Calu3 (cell line): ENCODE measurements at regions of chr15 and their contacts with region 1.

Region 1: DNA sequence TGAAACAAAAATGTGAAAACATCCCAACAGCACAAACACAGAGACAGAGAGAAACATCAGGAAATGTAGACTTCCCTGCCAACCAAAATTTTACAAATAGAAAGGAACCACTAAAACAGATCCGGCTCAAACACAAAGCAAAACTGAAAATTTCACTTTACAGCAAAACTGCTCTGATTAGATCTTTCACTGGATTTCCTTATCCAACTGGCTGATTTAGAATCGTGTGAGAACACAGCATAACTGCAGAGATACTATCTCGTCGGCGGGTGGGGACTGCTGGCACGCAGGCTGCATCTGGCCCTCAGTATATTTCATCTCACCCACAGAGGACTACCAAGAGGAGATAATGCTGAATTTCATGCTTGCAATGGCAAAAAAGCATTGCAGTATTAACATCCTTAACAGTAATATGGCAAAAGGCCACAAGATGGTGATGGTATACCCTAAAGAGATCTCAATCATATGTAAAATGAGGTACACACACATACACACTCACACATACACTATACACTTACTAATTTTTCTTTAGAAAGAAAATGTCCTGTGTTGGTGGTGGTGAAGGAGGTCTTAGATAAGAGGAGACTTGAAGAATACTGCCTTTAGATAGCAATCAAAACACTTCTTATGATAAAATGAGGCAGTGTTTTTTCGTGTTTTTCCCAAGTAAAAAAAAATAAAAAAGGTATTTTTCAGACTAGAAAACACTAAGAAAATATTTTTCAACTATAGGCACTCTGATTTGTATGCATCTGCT is 10.6 kb upstream of the LEO1 start:
- DNase-seq: peak; percentile 13
- H3K4me3 Mint-ChIP-seq: peak overlapping the region; percentile 28
- H3K27ac Mint-ChIP-seq: no peak overlapping the region
- H3K4me1 Mint-ChIP-seq: peaks cover 14% of the 10 kb centered on the region
- H3K27me3 Mint-ChIP-seq: no peaks in the 10 kb centered on the region
- CTCF ChIP-seq: peak; percentile 48

Region 2: GRCh38 chr15:51992976-51993375 is 10.8 kb after region 1 on chr15:
- CTCF ChIA-PET with region 1: no interaction called
- intact Hi-C with region 1: no loop called
- DNase-seq: no peak
- H3K4me3 Mint-ChIP-seq: no peak overlapping the region
- H3K27ac Mint-ChIP-seq: no peak overlapping the region
- H3K4me1 Mint-ChIP-seq: peaks cover 20% of the 10 kb centered on the region
- H3K27me3 Mint-ChIP-seq: no peaks in the 10 kb centered on the region
- CTCF ChIP-seq: no peak

Region 3: DNA sequence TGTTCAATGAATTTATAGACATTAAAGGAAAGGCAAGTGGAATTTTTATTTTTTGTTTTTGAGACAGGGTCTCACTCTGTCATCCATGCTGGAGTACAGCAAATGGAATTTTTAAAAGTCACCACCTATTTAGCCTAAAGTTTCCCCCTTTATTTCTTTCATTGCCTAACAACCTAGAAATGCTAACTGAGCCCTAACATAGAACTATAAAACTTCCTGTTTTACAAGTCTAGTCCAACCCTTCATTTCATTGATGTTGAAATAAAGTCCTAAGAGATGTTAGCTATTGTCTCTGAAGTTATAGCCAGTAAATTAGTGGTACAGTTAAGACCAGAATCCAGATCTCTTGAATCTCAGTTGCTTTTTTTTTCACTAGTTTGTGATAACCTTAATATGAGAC is 75.8 kb after region 1 on chr15:
- CTCF ChIA-PET with region 1: no interaction called
- intact Hi-C with region 1: no loop called
- DNase-seq: no peak
- H3K4me3 Mint-ChIP-seq: no peak overlapping the region
- H3K27ac Mint-ChIP-seq: no peak overlapping the region
- H3K4me1 Mint-ChIP-seq: no peaks in the 10 kb centered on the region
- H3K27me3 Mint-ChIP-seq: no peaks in the 10 kb centered on the region
- CTCF ChIP-seq: no peak

Region 4: DNA sequence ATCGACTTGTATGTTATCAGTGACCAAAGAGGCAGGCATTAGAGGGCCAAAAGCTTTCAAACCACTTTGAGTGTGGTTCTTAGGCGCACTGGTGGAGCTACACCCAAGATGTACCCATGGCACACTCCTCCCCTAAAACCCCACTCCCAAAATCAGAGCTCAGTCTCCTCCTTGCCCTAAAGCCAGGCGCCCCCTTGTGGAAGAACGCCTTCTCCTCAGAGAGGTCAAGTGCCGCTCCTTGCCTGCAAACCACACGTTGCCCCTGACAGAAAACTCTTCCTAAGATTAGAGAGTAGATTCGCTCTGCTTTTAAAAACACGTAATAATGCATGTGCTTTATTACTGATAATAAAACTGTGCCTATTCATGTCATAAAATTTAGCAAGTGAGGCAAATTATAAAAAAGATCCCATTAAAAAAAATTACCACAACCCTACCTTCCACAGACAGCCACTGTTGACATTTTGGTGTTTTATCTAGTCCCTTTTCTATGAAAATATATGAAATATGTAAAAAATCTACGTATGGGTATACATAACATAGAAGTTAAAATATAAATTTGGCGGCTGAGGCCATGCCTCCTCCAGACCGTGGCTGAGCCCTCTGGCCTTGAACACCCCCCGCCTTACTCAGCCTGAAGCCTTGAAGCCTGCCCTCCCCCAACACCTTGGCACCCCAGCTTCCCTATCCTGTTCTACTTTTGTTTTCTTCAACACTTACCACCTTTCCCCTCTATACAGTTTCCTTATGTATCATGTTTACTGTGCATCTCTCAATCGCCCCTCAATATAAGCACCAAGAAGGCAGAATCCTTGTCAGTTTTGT is 96.9 kb after region 1 on chr15:
- CTCF ChIA-PET with region 1: interaction called, 10 read pairs
- intact Hi-C with region 1: loop called (anchors 1 kb)
- DNase-seq: peak; percentile 87
- H3K4me3 Mint-ChIP-seq: no peak overlapping the region
- H3K27ac Mint-ChIP-seq: no peak overlapping the region
- H3K4me1 Mint-ChIP-seq: peaks cover 7% of the 10 kb centered on the region
- H3K27me3 Mint-ChIP-seq: no peaks in the 10 kb centered on the region
- CTCF ChIP-seq: peak; percentile 78

Region 5: DNA sequence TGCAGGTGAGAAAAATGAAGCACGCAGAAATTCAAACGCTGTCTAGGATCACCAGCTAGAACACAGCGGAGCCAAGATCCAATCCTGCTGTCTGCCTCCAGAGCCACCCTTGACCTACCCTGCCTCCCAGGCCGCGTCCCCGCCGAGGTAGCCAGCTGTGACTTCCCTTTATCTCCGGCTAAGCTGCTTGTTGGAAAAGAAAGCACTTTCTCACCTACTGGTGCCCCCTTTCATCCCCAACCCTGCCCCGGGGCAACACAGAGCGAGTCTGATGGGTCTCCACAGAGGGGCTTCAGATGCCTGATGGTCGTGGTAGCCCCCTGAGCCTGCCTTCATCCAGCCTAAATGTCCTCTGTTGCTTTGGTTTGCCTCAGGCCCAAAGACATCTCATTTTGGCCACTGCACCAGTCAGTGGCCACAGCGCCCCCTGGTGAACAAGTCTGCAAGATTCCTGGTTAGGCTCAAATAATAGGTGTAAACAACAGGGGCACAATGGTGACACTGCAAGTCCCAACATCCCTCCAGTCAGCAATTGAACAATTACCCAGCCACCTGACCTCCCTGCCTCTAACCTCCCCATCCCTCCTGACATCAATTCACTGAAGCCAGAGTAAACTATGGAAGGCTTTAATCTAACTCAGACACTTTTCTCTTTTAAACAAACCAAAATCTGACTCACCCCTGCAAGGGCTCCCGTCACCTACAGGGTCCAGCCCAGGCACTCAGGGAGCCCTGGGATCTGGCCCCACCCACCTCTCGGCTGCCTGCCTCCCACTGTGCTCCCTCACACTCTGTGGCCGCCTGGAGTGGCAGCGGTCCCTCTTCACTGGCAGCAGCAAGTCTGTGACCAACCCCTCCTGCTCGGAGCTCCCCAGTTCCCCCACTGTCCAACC is 157.7 kb after region 1 on chr15:
- CTCF ChIA-PET with region 1: interaction called, 5 read pairs
- intact Hi-C with region 1: loop called (anchors 1 kb)
- DNase-seq: peak; percentile 76
- H3K4me3 Mint-ChIP-seq: no peak overlapping the region
- H3K27ac Mint-ChIP-seq: no peak overlapping the region
- H3K4me1 Mint-ChIP-seq: peaks cover 16% of the 10 kb centered on the region
- H3K27me3 Mint-ChIP-seq: no peaks in the 10 kb centered on the region
- CTCF ChIP-seq: peak; percentile 75

Region 6: GRCh38 chr15:52246686-52247431 is 264.7 kb after region 1 on chr15:
- CTCF ChIA-PET with region 1: no interaction called
- intact Hi-C with region 1: no loop called
- DNase-seq: no peak
- H3K4me3 Mint-ChIP-seq: no peak overlapping the region
- H3K27ac Mint-ChIP-seq: no peak overlapping the region
- H3K4me1 Mint-ChIP-seq: peaks cover 9% of the 10 kb centered on the region
- H3K27me3 Mint-ChIP-seq: no peaks in the 10 kb centered on the region
- CTCF ChIP-seq: no peak